PC-3 (cell line): ENCODE measurements at regions of chr1 and their contacts with region 1.

Region 1: DNA sequence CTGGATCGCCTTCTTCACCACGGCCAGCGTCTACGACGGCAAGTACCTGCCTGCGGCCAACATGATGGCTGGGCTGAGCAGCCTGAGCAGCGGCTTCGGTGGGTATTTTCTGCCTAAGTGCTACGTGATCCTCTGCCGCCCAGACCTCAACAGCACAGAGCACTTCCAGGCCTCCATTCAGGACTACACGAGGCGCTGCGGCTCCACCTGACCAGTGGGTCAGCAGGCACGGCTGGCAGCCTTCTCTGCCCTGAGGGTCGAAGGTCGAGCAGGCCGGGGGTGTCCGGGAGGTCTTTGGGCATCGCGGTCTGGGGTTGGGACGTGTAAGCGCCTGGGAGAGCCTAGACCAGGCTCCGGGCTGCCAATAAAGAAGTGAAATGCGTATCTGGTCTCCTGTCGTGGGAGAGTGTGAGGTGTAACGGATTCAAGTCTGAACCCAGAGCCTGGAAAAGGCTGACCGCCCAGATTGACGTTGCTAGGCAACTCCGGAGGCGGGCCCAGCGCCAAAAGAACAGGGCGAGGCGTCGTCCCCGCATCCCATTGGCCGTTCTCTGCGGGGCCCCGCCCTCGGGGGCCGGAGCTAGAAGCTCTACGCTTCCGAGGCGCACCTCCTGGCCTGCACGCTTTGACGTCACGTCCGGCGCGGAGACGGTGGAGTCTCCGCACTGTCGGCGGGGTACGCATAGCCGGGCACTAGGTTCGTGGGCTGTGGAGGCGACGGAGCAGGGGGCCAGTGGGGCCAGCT is at the start of gene ZBTB48:
- DNase-seq: peak; percentile 100
- ATAC-seq: peak; percentile 96
- H3K4me3 ChIP-seq: peak within 1 kb of the TSS; percentile 92
- H3K27ac ChIP-seq: 0 out of 2 replicates have a peak within 1 kb of the TSS, but pooled peaks have one; percentile 11
- H3K4me1 ChIP-seq: peaks cover 27% of the 10 kb centered on the region
- H3K27me3 ChIP-seq: no peaks in the 10 kb centered on the region
- CTCF ChIP-seq: no peak
- total RNA-seq, gene ZBTB48: 42.7 and 47.2 TPM in 2 replicates

Region 2: GRCh38 chr1:6554031-6554906 is 25.3 kb before region 1 on chr1 and contains the start of gene NOL9:
- CTCF ChIA-PET with region 1: interaction called, 3 read pairs
- POLR2A ChIA-PET with region 1: interaction called, 7 read pairs
- intact Hi-C with region 1: loop called (anchors 1 kb)
- DNase-seq: peak; percentile 98
- ATAC-seq: peak; percentile 96
- H3K4me3 ChIP-seq: peak within 1 kb of the TSS; percentile 89
- H3K27ac ChIP-seq: no peak within 1 kb of the TSS
- H3K4me1 ChIP-seq: peaks cover 12% of the 10 kb centered on the region
- H3K27me3 ChIP-seq: no peaks in the 10 kb centered on the region
- CTCF ChIP-seq: peak; percentile 97
- total RNA-seq, gene NOL9: 79.1 and 102 TPM in 2 replicates

Region 3: DNA sequence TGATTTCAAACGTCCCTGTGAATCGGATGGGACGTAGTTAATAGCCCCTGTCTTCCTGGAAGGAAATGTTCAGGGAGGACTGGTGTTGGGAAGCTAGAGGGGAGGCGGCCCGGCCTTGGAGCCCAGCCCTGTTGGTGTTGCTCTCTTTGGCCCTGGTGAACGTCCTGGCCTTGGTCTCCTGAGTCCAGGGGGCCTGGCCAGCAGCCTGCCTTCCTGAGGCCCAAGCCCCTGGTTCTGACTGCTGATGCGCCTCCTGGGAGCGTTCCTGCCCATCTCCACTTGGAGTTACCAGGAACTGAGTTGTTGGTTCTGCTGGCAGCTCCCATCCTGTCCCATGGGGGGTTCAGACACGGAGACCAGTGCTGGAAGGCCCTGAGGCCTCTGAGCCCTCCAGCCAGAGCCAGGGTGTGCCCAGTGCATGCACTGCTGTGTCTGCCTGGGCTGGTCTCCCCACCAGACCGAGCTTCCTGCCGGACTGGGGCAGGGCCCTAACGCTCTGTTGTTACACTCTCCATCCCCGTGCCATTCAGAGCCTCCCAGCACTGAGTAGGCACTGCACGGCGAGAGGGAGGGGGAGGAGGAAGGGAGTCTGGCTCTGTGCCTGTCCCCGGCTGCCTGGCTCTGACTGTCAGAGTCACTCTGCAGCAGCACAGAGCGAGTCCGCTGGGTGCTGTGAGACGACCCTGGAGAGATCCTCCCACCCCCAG is 809.1 kb after region 1 on chr1:
- CTCF ChIA-PET with region 1: no interaction called
- POLR2A ChIA-PET with region 1: no interaction called
- intact Hi-C with region 1: no loop called
- DNase-seq: peak; percentile 8
- ATAC-seq: no peak; the same call in 1 of the 2 replicates
- H3K4me3 ChIP-seq: no peak overlapping the region
- H3K27ac ChIP-seq: peak overlapping the region; percentile 49; the same call in 1 of the 2 replicates
- H3K4me1 ChIP-seq: peaks cover 24% of the 10 kb centered on the region
- H3K27me3 ChIP-seq: no peaks in the 10 kb centered on the region
- CTCF ChIP-seq: no peak